ENCODE measurements at regions of chr2 and their contacts with region 1.

Region 1: GRCh38 chr2:44981136-44982108 is 27.8 kb downstream of the SIX2 start:
- DNase-seq: peak; percentile 54 to 85
- ATAC-seq: peak; percentile 79

Region 2: GRCh38 chr2:45128580-45128997 is 147.2 kb after region 1 on chr2:
- intact Hi-C with region 1: no loop called
- DNase-seq: no peak
- ATAC-seq: no peak

Region 3: GRCh38 chr2:45494269-45494977 is 513.0 kb after region 1 on chr2:
- intact Hi-C with region 1: loop called (anchors 2 to 10 kb)
- DNase-seq: no peak
- ATAC-seq: peak; percentile 54